Activated CD4-positive, alpha-beta memory T cell treated with anti-CD3 and anti-CD28 coated beads for 36 hours (primary cell): ENCODE measurements at regions of chr1 and their contacts with region 1.

Region 1: DNA sequence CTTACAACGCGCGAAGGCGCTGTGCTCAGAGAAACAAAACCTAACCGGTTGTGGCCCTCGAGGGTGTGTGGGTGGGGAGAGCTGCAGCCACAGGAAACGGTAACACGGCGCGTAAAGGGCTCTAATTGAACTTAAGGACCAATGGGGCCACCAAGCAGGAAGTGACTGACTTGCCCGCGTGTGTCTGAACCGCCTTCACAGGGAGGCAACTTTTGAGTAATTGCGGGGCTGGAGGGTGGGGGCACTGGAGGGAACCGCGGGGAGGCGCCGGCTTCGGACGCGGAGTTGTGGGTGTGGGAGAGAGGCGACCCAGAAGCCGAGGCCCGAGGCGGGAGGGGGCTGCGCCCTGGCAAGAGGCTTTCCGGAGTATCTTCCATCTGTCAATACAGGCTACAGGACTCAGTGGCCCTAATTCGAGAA is 577 bp upstream of the PNRC2 start:
- DNase-seq: peak; percentile 97
- H3K4me3 Mint-ChIP-seq: peak overlapping the region; percentile 100
- H3K27ac Mint-ChIP-seq: peak overlapping the region; percentile 100
- H3K4me1 Mint-ChIP-seq: peaks cover 53% of the 10 kb centered on the region
- H3K27me3 Mint-ChIP-seq: no peaks in the 10 kb centered on the region

Region 2: DNA sequence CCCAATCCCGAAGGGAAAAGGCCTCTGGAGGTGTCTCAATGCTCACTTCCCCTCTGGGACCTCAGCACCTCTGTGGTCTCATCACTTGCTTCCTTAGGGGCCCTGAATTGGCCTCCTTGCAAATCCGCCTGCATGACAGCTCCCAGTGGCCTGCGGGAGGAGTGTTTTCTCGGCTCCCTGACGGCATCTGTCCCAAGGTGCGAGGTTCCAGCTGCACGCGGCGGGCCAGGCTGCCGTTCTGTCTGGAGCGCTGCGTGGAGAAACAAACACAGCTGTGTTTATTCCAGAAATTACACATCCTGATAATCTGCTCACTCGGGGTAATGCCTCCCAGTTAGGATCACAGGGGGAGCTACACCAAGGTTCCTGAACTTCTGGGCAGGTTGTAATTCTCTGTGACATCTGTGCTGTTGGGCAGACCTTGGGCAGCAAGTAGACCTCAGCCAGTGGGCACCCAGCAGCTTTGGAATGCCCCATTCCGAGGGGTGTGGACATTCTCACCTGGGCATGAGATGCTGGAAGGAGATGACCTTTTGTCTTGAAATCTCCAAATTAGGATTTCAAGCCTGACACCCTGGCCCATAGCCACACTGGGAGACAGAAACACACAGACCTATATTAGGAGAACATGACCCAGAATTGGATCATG is 1230.2 kb before region 1 on chr1:
- CTCF ChIA-PET with region 1: no interaction called
- POLR2A ChIA-PET with region 1: no interaction called
- intact Hi-C with region 1: no loop called
- DNase-seq: no peak
- H3K4me3 Mint-ChIP-seq: no peak overlapping the region
- H3K27ac Mint-ChIP-seq: no peak overlapping the region
- H3K4me1 Mint-ChIP-seq: no peaks in the 10 kb centered on the region
- H3K27me3 Mint-ChIP-seq: peaks cover 17% of the 10 kb centered on the region

Region 3: GRCh38 chr1:23825076-23825761 is 133.8 kb before region 1 on chr1 and contains the start of gene HMGCL:
- CTCF ChIA-PET with region 1: interaction called, 3 read pairs
- POLR2A ChIA-PET with region 1: interaction called, 3 read pairs
- intact Hi-C with region 1: loop called (anchors 5 kb)
- DNase-seq: peak; percentile 94
- H3K4me3 Mint-ChIP-seq: peak within 1 kb of the TSS; percentile 97
- H3K27ac Mint-ChIP-seq: peak within 1 kb of the TSS; percentile 95
- H3K4me1 Mint-ChIP-seq: peaks cover 17% of the 10 kb centered on the region
- H3K27me3 Mint-ChIP-seq: no peaks in the 10 kb centered on the region
- total RNA-seq, gene HMGCL: 34.2 to 35.3 TPM

Region 4: GRCh38 chr1:23845163-23845562 is 113.9 kb before region 1 on chr1:
- CTCF ChIA-PET with region 1: no interaction called
- POLR2A ChIA-PET with region 1: no interaction called
- intact Hi-C with region 1: no loop called
- DNase-seq: no peak
- H3K4me3 Mint-ChIP-seq: no peak overlapping the region
- H3K27ac Mint-ChIP-seq: no peak overlapping the region
- H3K4me1 Mint-ChIP-seq: no peaks in the 10 kb centered on the region
- H3K27me3 Mint-ChIP-seq: no peaks in the 10 kb centered on the region

Region 5: GRCh38 chr1:23947366-23947765 is 11.7 kb before region 1 on chr1:
- CTCF ChIA-PET with region 1: interaction called, 12 read pairs
- POLR2A ChIA-PET with region 1: no interaction called
- intact Hi-C with region 1: no loop called
- DNase-seq: no peak
- H3K4me3 Mint-ChIP-seq: no peak overlapping the region
- H3K27ac Mint-ChIP-seq: no peak overlapping the region
- H3K4me1 Mint-ChIP-seq: no peaks in the 10 kb centered on the region
- H3K27me3 Mint-ChIP-seq: peaks cover 1% of the 10 kb centered on the region

Region 6: GRCh38 chr1:24027838-24028468 is 68.9 kb after region 1 on chr1:
- CTCF ChIA-PET with region 1: interaction called, 6 read pairs
- POLR2A ChIA-PET with region 1: no interaction called
- intact Hi-C with region 1: loop called (anchors 5 kb)
- DNase-seq: no peak
- H3K4me3 Mint-ChIP-seq: no peak overlapping the region
- H3K27ac Mint-ChIP-seq: no peak overlapping the region
- H3K4me1 Mint-ChIP-seq: no peaks in the 10 kb centered on the region
- H3K27me3 Mint-ChIP-seq: no peaks in the 10 kb centered on the region

Region 7: DNA sequence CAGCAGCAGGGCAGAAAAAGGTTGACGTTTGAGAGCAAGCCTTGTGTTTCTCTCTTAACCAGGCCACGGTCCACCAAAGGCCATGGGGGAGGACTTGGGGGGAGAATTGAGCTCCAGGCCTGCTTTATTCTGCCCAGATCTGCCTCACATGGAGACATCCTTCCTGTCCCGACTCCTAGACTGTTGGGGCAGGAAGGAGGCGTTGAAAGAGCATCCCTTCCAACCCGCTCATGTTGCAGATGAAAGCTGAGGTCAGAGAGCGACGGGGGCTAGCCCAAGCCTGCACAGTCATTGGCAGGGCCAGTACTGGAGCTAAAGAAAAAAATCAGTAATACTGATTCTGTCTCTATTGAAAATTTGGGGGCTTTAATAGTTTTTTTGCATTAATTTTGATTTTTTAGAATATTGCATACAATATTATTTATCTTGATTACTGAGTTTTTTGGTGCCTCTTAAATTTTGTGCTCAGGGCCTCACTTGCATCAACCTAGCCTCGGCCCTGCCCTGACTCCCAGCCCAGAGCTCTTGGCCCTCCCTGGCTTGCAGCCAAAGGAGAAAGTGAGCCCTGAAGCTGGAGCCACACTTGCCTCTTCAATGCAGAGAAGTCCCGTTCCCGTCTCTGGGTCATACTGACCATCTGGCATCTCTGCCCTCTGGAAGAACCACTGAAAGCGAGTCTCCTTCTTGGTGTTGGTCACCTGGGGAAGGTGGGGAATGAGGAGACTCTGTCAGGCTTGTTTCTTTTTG is 106.4 kb after region 1 on chr1:
- CTCF ChIA-PET with region 1: no interaction called
- POLR2A ChIA-PET with region 1: no interaction called
- intact Hi-C with region 1: no loop called
- DNase-seq: no peak
- H3K4me3 Mint-ChIP-seq: no peak overlapping the region
- H3K27ac Mint-ChIP-seq: no peak overlapping the region
- H3K4me1 Mint-ChIP-seq: no peaks in the 10 kb centered on the region
- H3K27me3 Mint-ChIP-seq: peaks cover 6% of the 10 kb centered on the region

Region 8: GRCh38 chr1:24248859-24249258 is 289.8 kb after region 1 on chr1:
- CTCF ChIA-PET with region 1: no interaction called
- POLR2A ChIA-PET with region 1: no interaction called
- intact Hi-C with region 1: no loop called
- DNase-seq: no peak
- H3K4me3 Mint-ChIP-seq: no peak overlapping the region
- H3K27ac Mint-ChIP-seq: no peak overlapping the region
- H3K4me1 Mint-ChIP-seq: no peaks in the 10 kb centered on the region
- H3K27me3 Mint-ChIP-seq: no peaks in the 10 kb centered on the region